ENCODE measurements at regions of chr14 and their contacts with region 1.

Region 1: GRCh38 chr14:95534299-95535225 is at the start of gene GLRX5:
- DNase-seq: peak; percentile 99
- H3K4me3 Mint-ChIP-seq: peak within 1 kb of the TSS; percentile 92
- H3K27ac Mint-ChIP-seq: peak within 1 kb of the TSS; percentile 82
- H3K4me1 Mint-ChIP-seq: peaks cover 61% of the 10 kb centered on the region
- H3K27me3 Mint-ChIP-seq: no peaks in the 10 kb centered on the region
- total RNA-seq, gene GLRX5: 34.2 to 34.6 TPM

Region 2: DNA sequence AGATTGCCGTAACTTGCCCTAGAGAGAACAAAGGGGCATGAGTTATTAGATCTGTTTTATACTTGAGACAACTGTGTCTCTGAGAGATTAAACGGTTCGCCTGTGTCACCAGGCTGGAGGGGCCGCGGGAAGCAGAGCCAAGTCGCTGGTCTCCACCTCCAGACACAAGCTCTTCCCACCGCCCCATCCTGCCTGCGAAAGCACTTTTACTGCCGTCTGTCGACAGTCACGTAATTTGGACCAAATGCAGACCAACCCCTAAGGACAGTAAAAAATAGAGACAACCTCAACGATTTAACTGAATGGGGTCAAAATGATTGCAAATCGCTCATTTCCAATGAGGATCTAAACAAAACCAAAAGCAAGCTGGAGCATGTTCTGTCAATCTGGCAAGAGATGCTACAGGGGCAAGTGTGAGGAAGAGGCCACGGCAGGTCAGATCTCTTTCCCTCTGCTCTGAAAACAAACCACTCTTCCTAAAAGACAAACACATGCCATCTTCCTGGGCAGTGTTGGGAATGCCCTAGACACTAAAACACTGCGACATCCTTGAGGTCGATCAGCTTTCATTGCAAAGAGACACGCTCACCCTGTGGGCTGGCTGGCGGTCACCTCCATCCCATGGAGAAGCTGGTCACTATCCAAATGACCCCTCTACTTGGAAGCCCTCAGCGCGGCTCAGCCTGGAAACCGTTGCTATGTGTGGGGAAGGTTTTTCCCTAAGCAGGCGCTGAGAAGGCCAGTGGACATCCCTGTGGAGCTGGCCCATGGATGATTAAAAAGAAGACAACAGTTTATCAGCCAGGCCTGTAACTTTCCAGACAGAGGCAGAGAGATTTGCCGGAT is 781.7 kb before region 1 on chr14:
- CTCF ChIA-PET with region 1: no interaction called
- intact Hi-C with region 1: no loop called
- DNase-seq: no peak
- H3K4me3 Mint-ChIP-seq: no peak overlapping the region
- H3K27ac Mint-ChIP-seq: no peak overlapping the region
- H3K4me1 Mint-ChIP-seq: no peaks in the 10 kb centered on the region
- H3K27me3 Mint-ChIP-seq: peaks cover 5% of the 10 kb centered on the region

Region 3: DNA sequence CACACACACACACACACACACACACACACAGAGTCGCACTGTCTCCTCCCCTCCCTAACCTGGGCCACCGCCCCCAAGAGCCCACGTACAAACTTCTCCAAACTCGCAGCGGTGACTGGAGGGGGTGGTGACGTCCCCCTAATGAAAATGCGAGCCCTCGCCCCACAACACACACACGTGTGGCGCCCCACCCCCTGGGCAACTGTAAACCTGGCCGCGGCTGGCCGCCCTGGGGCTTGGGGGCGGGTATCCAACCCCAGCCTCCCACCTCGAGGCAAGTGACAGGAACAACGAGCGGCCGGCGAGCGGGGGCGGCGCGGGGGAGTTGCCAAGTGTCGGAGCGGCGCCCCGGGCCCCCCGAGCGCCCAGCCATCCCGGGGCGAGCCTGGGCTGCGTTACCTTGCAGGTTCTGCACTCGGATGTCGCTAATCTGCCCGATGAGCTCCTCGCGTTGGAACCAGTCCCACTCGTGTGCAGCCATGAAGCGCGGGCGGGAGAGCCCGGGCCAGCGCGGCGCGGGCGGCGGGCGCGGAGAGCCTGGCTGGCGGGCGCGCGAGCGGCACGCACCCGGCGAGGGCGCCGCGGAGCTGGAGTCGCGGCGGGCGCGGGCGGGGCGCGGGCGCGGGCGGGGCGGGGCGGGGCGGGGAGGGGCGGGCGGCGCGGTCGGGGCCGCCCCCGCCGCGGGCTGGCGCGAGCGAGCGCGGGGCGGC is 215.1 kb before region 1 on chr14 and contains the start of gene CLMN:
- CTCF ChIA-PET with region 1: no interaction called
- intact Hi-C with region 1: loop called (anchors 5 kb)
- DNase-seq: peak; percentile 35
- H3K4me3 Mint-ChIP-seq: peak within 1 kb of the TSS; percentile 69
- H3K27ac Mint-ChIP-seq: no peak within 1 kb of the TSS
- H3K4me1 Mint-ChIP-seq: peaks cover 11% of the 10 kb centered on the region
- H3K27me3 Mint-ChIP-seq: peaks cover 22% of the 10 kb centered on the region
- total RNA-seq, gene CLMN: 1.9 to 2.6 TPM

Measured in activated naive CD4-positive, alpha-beta T cell treated with anti-CD3 and anti-CD28 coated beads for 36 hours (primary cell).